ENCODE measurements at regions of chrX and their contacts with region 1.

Region 1: GRCh38 chrX:151151665-151152267 is 24.6 kb upstream of the GPR50 start:
- DNase-seq: peak in 6 of 9 experiments; percentile 4 to 70 (median 43)
- ATAC-seq: no peak
- H3K4me3 ChIP-seq: no peak overlapping the region
- H3K4me3 Mint-ChIP-seq: no peak overlapping the region
- H3K27ac ChIP-seq: no peak overlapping the region
- H3K27ac Mint-ChIP-seq: no peak overlapping the region
- H3K4me1 ChIP-seq: no peaks in the 10 kb centered on the region
- H3K4me1 Mint-ChIP-seq: no peaks in the 10 kb centered on the region
- H3K27me3 ChIP-seq: no peaks in the 10 kb centered on the region
- H3K27me3 Mint-ChIP-seq: peaks cover 16% of the 10 kb centered on the region
- CTCF ChIP-seq: peak; percentile 66

Region 2: DNA sequence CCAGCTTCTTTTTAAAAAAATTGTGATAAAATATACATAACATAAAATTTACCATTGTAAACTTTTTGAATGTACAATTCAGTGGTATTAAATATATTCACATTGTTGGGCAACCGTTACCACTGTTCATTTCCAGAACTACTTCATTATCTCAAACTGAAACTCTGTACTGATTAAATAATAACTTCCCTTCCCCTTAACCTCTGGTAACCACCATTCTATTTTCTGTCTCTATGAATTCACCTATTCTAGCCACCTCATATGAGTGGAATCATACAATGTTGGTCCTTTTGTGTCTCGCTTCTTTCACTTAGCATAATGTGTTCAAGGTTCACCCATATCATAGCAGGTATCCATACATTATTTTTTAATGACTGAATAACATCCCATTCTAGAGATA is 32.9 kb after region 1 on chrX:
- CTCF ChIA-PET with region 1: no interaction called
- POLR2A ChIA-PET with region 1: no interaction called
- intact Hi-C with region 1: no loop called
- DNase-seq: no peak
- ATAC-seq: no peak
- H3K4me3 ChIP-seq: no peak overlapping the region
- H3K4me3 Mint-ChIP-seq: no peak overlapping the region
- H3K27ac ChIP-seq: no peak overlapping the region
- H3K27ac Mint-ChIP-seq: no peak overlapping the region
- H3K4me1 ChIP-seq: no peaks in the 10 kb centered on the region
- H3K4me1 Mint-ChIP-seq: peaks cover 3% of the 10 kb centered on the region
- H3K27me3 ChIP-seq: no peaks in the 10 kb centered on the region
- H3K27me3 Mint-ChIP-seq: peaks cover 43% of the 10 kb centered on the region
- CTCF ChIP-seq: no peak

Region 3: DNA sequence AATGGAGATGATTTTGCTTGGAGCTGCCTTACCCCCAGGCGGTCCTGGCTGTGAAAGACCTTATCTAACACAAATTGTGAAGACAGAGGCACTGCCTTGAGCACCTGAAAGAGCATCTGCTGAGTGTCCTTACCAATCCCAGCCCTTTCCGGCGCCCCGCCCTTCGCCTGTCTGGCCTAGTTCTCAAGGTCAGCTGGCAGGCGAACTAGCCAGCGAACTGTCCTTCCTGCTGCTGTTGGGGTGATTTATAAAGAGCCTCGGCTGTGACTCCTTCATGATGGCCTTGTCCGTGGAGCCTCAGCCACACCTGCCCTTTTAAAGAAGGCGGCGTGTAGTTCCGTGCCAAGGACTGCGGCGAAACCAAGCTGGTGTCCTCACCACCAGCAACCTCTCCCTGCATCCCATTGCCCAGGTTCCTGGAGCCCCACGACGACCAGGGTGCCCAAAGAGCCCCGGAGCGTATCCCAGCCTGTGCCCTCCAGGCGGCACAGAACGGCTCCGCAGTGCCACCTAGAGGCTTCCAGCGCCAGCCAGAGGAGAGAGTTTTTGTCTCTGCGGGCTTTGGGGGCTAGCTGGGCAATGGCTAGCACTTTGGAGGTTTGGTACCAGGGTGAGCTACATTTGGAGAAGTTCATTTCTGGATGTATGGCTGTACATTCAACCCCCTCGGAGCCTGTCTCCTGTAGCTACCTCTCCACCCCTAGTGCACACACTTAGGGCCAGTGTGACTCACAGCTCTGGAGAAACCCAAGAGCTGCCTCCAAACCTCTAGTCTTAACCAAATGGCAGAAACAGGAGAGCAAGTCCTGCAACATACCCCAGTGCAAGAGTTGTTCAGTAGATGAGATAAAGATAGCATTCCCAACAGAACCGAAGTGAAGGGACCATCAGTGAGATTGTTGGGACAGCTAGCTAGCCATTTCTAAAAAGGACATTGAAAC is 208.4 kb after region 1 on chrX:
- CTCF ChIA-PET with region 1: no interaction called
- POLR2A ChIA-PET with region 1: no interaction called
- intact Hi-C with region 1: loop called (anchors 5 to 10 kb)
- DNase-seq: peak; percentile 4 to 54 (median 35)
- ATAC-seq: peak; percentile 54
- H3K4me3 ChIP-seq: no peak overlapping the region
- H3K4me3 Mint-ChIP-seq: peak overlapping the region; percentile 37
- H3K27ac ChIP-seq: no peak overlapping the region
- H3K27ac Mint-ChIP-seq: no peak overlapping the region
- H3K4me1 ChIP-seq: peaks cover 6% of the 10 kb centered on the region
- H3K4me1 Mint-ChIP-seq: peaks cover 3% of the 10 kb centered on the region
- H3K27me3 ChIP-seq: no peaks in the 10 kb centered on the region
- H3K27me3 Mint-ChIP-seq: peaks cover 16% of the 10 kb centered on the region
- CTCF ChIP-seq: peak; percentile 45

Region 4: GRCh38 chrX:151488677-151489076 is 336.9 kb after region 1 on chrX:
- CTCF ChIA-PET with region 1: no interaction called
- POLR2A ChIA-PET with region 1: no interaction called
- intact Hi-C with region 1: loop called (anchors 1 to 5 kb)
- DNase-seq: peak in 6 of 9 experiments; percentile 0 to 49 (median 18)
- ATAC-seq: no peak
- H3K4me3 ChIP-seq: no peak overlapping the region
- H3K4me3 Mint-ChIP-seq: no peak overlapping the region
- H3K27ac ChIP-seq: no peak overlapping the region
- H3K27ac Mint-ChIP-seq: no peak overlapping the region
- H3K4me1 ChIP-seq: no peaks in the 10 kb centered on the region
- H3K4me1 Mint-ChIP-seq: no peaks in the 10 kb centered on the region
- H3K27me3 ChIP-seq: no peaks in the 10 kb centered on the region
- H3K27me3 Mint-ChIP-seq: no peaks in the 10 kb centered on the region
- CTCF ChIP-seq: no peak

Region 5: GRCh38 chrX:151680805-151681204 is 529.0 kb after region 1 on chrX:
- CTCF ChIA-PET with region 1: interaction called, 4 read pairs
- POLR2A ChIA-PET with region 1: no interaction called
- intact Hi-C with region 1: loop called in 1 of 2 experiments (anchors 1 kb)
- DNase-seq: peak; percentile 6 to 65 (median 45)
- ATAC-seq: peak; percentile 34
- H3K4me3 ChIP-seq: no peak overlapping the region
- H3K4me3 Mint-ChIP-seq: no peak overlapping the region
- H3K27ac ChIP-seq: no peak overlapping the region
- H3K27ac Mint-ChIP-seq: no peak overlapping the region
- H3K4me1 ChIP-seq: no peaks in the 10 kb centered on the region
- H3K4me1 Mint-ChIP-seq: no peaks in the 10 kb centered on the region
- H3K27me3 ChIP-seq: no peaks in the 10 kb centered on the region
- H3K27me3 Mint-ChIP-seq: peaks cover 10% of the 10 kb centered on the region
- CTCF ChIP-seq: peak; percentile 44

Region 6: GRCh38 chrX:152632445-152633097 is 1480.8 kb after region 1 on chrX:
- CTCF ChIA-PET with region 1: interaction called, 7 read pairs
- POLR2A ChIA-PET with region 1: no interaction called
- intact Hi-C with region 1: loop called (anchors 5 kb)
- DNase-seq: peak in 4 of 9 experiments; percentile 6 to 31 (median 12)
- ATAC-seq: no peak
- H3K4me3 ChIP-seq: no peak overlapping the region
- H3K4me3 Mint-ChIP-seq: no peak overlapping the region
- H3K27ac ChIP-seq: no peak overlapping the region
- H3K27ac Mint-ChIP-seq: no peak overlapping the region
- H3K4me1 ChIP-seq: no peaks in the 10 kb centered on the region
- H3K4me1 Mint-ChIP-seq: no peaks in the 10 kb centered on the region
- H3K27me3 ChIP-seq: no peaks in the 10 kb centered on the region
- H3K27me3 Mint-ChIP-seq: peaks cover 14% of the 10 kb centered on the region
- CTCF ChIP-seq: peak; percentile 56

Region 7: DNA sequence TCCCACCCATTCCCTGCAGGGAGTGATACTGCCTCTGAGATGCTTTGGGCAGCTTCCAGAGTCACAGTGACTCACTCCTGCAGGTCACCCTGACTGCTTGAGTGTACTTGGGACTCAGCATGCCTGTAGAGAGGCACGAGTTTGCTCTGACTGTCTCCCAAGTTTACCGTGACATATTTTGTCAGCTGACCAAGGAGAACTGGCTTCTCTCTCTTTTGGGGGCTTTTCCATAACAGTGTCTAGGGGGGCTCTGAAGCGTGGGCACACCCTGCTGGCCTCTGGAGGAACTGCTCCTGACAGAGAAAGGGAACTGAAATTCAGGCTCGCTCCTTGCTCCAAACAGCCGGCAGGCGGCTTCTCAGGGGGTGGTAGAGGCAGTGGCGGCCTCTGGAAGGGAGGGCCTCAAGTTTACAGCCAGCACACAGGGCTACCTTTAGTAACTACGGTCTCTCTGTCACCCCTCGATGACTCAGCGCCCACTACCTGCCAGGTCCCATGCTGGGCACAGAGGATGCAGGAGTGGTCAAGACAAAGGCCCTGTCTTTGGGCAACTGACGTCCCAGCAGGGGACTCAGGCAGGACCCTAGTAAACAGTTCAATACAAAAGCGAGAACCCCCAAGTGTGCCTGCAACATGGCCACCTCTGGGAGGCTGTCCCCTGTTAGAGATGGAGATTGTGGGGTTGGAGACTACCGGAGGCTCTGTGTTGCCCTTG is 1763.9 kb after region 1 on chrX:
- CTCF ChIA-PET with region 1: no interaction called
- POLR2A ChIA-PET with region 1: no interaction called
- intact Hi-C with region 1: loop called in 1 of 2 experiments (anchors 10 kb)
- DNase-seq: peak in 3 of 9 experiments; percentile 12 to 38 (median 13)
- ATAC-seq: no peak
- H3K4me3 ChIP-seq: no peak overlapping the region
- H3K4me3 Mint-ChIP-seq: no peak overlapping the region
- H3K27ac ChIP-seq: no peak overlapping the region
- H3K27ac Mint-ChIP-seq: no peak overlapping the region
- H3K4me1 ChIP-seq: no peaks in the 10 kb centered on the region
- H3K4me1 Mint-ChIP-seq: peaks cover 6% of the 10 kb centered on the region
- H3K27me3 ChIP-seq: no peaks in the 10 kb centered on the region
- H3K27me3 Mint-ChIP-seq: no peaks in the 10 kb centered on the region
- CTCF ChIP-seq: peak; percentile 32

Region 8: DNA sequence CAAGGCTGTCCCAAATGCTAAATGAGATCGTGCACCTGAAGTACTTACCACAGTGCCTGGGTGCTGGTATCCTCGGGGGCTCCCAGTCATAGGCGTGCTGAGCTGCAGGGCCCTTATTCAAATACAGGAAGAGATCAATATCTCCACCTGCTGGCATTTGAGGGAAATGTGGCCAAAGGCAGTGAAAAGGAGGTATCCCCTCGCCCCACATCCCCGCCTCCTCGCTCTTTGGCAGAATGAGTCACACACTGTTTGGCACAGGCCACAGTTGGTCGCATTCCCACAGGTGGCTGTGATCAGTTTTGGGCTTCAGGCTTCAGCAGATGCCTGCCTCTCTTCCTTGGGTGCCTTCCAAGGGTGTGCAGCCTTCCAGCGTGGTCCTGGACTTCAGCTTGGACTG is 1774.5 kb after region 1 on chrX:
- CTCF ChIA-PET with region 1: no interaction called
- POLR2A ChIA-PET with region 1: no interaction called
- intact Hi-C with region 1: loop called in 1 of 2 experiments (anchors 5 kb)
- DNase-seq: peak; percentile 5 to 64 (median 41)
- ATAC-seq: peak; percentile 84
- H3K4me3 ChIP-seq: no peak overlapping the region
- H3K4me3 Mint-ChIP-seq: no peak overlapping the region
- H3K27ac ChIP-seq: no peak overlapping the region
- H3K27ac Mint-ChIP-seq: no peak overlapping the region
- H3K4me1 ChIP-seq: peaks cover 16% of the 10 kb centered on the region
- H3K4me1 Mint-ChIP-seq: peaks cover 16% of the 10 kb centered on the region
- H3K27me3 ChIP-seq: no peaks in the 10 kb centered on the region
- H3K27me3 Mint-ChIP-seq: no peaks in the 10 kb centered on the region
- CTCF ChIP-seq: peak; percentile 20

Measured in CD8-positive, alpha-beta T cell (primary cell).